ENCODE measurements at regions of chr2 and their contacts with region 1.

Region 1: GRCh38 chr2:54634564-54635511 is 88.6 kb upstream of the EML6 start:
- DNase-seq: peak in 2 of 9 experiments; percentile 26 to 55
- ATAC-seq: peak; percentile 53
- H3K4me3 ChIP-seq: no peak overlapping the region
- H3K4me3 Mint-ChIP-seq: peak overlapping the region; percentile 6
- H3K27ac ChIP-seq: peak overlapping the region in 1 of 2 experiments; percentile 8
- H3K27ac Mint-ChIP-seq: peak overlapping the region; percentile 49
- H3K4me1 ChIP-seq: peaks cover 16% of the 10 kb centered on the region
- H3K4me1 Mint-ChIP-seq: peaks cover 34% of the 10 kb centered on the region
- H3K27me3 ChIP-seq: no peaks in the 10 kb centered on the region
- H3K27me3 Mint-ChIP-seq: no peaks in the 10 kb centered on the region
- CTCF ChIP-seq: no peak

Region 2: DNA sequence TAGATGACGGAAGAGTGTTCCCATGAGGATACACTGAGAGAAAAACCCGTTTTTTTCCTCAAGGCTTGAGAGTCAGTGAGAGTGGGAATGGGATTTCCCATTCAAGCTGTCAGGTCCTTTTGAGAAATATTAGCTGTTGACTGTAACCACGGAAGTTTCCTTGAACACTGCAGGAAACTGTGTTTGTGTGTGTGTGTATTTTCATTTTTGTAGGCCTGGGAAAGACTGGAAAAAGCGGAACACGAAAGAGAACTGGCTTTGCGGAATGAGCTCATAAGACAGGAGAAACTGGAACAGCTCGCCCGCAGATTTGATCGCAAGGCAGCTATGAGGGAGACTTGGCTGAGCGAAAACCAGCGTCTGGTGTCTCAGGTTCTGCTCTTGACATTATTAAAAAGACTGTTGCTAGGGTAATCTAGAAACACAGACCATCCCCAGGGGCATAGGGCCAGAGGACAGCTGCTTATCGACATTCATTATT is 10.2 kb before region 1 on chr2:
- CTCF ChIA-PET with region 1: interaction called, 7 read pairs
- POLR2A ChIA-PET with region 1: interaction called, 4 read pairs
- intact Hi-C with region 1: loop called in 1 of 2 experiments (anchors 2 kb)
- DNase-seq: no peak
- ATAC-seq: no peak
- H3K4me3 ChIP-seq: no peak overlapping the region
- H3K4me3 Mint-ChIP-seq: no peak overlapping the region
- H3K27ac ChIP-seq: no peak overlapping the region
- H3K27ac Mint-ChIP-seq: no peak overlapping the region
- H3K4me1 ChIP-seq: no peaks in the 10 kb centered on the region
- H3K4me1 Mint-ChIP-seq: peaks cover 7% of the 10 kb centered on the region
- H3K27me3 ChIP-seq: no peaks in the 10 kb centered on the region
- H3K27me3 Mint-ChIP-seq: no peaks in the 10 kb centered on the region
- CTCF ChIP-seq: no peak

Region 3: DNA sequence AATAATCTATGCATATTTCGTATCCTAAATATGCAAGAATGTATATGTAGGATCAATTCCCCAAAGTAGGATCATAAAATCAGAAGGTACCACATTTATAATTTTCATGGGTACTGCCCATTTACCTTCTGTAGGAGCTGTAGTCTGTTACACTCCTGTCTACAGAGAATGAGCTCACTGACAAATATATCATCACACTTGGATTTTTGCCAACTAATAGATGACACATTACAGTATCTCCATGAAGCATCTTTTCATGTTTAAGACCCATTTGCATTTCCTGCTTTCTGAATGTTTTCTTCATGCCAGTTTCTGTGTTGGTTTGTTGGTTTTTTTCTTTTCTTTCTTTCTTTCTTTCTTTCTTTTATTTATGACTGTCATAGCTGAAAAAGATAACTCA is 17.7 kb after region 1 on chr2:
- CTCF ChIA-PET with region 1: interaction called, 5 read pairs
- POLR2A ChIA-PET with region 1: no interaction called
- intact Hi-C with region 1: loop called in 1 of 2 experiments (anchors 2 kb)
- DNase-seq: no peak
- ATAC-seq: peak; percentile 41
- H3K4me3 ChIP-seq: no peak overlapping the region
- H3K4me3 Mint-ChIP-seq: no peak overlapping the region
- H3K27ac ChIP-seq: no peak overlapping the region
- H3K27ac Mint-ChIP-seq: no peak overlapping the region
- H3K4me1 ChIP-seq: no peaks in the 10 kb centered on the region
- H3K4me1 Mint-ChIP-seq: no peaks in the 10 kb centered on the region
- H3K27me3 ChIP-seq: no peaks in the 10 kb centered on the region
- H3K27me3 Mint-ChIP-seq: no peaks in the 10 kb centered on the region
- CTCF ChIP-seq: no peak

Measured in CD8-positive, alpha-beta T cell (primary cell).